ENCODE measurements at regions of chr21 and their contacts with region 1.

Region 1: GRCh38 chr21:35179990-35180540 is 131.0 kb upstream of the RUNX1 start:
- DNase-seq: peak; percentile 28
- ATAC-seq: peak; percentile 60
- H3K4me3 Mint-ChIP-seq: no peak overlapping the region
- H3K27ac Mint-ChIP-seq: no peak overlapping the region
- H3K4me1 Mint-ChIP-seq: peaks cover 26% of the 10 kb centered on the region
- H3K27me3 Mint-ChIP-seq: no peaks in the 10 kb centered on the region

Region 2: DNA sequence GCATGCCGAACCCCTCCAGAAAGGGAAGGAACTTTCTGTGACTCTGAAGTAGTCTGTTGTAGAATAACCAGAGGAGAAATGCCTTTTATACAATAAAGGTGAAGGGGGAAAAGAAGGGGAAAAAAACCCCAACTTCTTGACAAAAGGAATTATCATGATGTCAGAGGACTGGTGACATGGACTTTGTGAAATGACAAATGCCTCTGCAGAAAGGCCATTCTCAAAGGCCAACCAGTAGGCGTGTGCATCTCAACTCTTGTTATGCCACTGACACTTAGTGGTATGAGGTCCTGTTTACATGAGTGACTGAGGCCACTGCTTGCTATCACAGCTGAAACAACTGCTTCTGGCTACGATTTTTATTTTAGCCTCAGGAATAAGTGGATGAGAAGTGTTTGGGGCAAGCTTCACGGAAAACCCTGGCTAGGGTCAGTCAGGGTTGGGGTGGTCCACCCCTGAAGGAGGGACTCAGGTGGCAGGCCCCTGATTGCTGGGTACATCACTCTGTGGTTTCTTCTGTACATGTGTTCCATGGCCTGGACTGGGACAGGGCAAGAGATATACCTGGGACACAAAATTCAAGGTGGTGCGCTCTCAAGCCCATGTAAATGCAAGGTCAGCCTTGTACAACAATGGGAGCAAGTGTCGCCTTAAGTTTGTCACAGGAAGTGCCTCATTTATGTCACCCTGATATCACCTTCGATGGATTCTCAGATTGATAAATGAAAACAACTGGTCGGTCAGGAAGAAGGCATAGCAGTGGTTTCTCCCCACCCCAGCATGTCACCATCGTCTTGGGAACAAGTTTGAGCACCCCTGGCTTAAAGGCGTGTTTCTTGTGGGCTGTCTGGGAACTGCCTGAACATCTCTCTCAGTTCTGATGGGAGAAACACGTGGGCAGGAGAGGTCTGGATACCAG is 143.3 kb before region 1 on chr21:
- CTCF ChIA-PET with region 1: no interaction called
- POLR2A ChIA-PET with region 1: no interaction called
- intact Hi-C with region 1: no loop called
- DNase-seq: no peak
- ATAC-seq: peak; percentile 51
- H3K4me3 Mint-ChIP-seq: peak overlapping the region; percentile 59
- H3K27ac Mint-ChIP-seq: peak overlapping the region; percentile 94
- H3K4me1 Mint-ChIP-seq: peaks cover 96% of the 10 kb centered on the region
- H3K27me3 Mint-ChIP-seq: no peaks in the 10 kb centered on the region

Region 3: GRCh38 chr21:35150562-35151226 is 29.4 kb before region 1 on chr21:
- CTCF ChIA-PET with region 1: no interaction called
- POLR2A ChIA-PET with region 1: no interaction called
- intact Hi-C with region 1: no loop called
- DNase-seq: no peak
- ATAC-seq: peak; percentile 72
- H3K4me3 Mint-ChIP-seq: peak overlapping the region; percentile 18
- H3K27ac Mint-ChIP-seq: peak overlapping the region; percentile 90
- H3K4me1 Mint-ChIP-seq: peaks cover 63% of the 10 kb centered on the region
- H3K27me3 Mint-ChIP-seq: no peaks in the 10 kb centered on the region

Region 4: GRCh38 chr21:35226948-35227744 is 47.1 kb after region 1 on chr21:
- CTCF ChIA-PET with region 1: no interaction called
- POLR2A ChIA-PET with region 1: no interaction called
- intact Hi-C with region 1: loop called in 1 of 2 experiments (anchors 5 kb)
- DNase-seq: peak; percentile 73
- ATAC-seq: peak; percentile 83
- H3K4me3 Mint-ChIP-seq: peak overlapping the region; percentile 45
- H3K27ac Mint-ChIP-seq: peak overlapping the region; percentile 85
- H3K4me1 Mint-ChIP-seq: peaks cover 37% of the 10 kb centered on the region
- H3K27me3 Mint-ChIP-seq: no peaks in the 10 kb centered on the region

Region 5: DNA sequence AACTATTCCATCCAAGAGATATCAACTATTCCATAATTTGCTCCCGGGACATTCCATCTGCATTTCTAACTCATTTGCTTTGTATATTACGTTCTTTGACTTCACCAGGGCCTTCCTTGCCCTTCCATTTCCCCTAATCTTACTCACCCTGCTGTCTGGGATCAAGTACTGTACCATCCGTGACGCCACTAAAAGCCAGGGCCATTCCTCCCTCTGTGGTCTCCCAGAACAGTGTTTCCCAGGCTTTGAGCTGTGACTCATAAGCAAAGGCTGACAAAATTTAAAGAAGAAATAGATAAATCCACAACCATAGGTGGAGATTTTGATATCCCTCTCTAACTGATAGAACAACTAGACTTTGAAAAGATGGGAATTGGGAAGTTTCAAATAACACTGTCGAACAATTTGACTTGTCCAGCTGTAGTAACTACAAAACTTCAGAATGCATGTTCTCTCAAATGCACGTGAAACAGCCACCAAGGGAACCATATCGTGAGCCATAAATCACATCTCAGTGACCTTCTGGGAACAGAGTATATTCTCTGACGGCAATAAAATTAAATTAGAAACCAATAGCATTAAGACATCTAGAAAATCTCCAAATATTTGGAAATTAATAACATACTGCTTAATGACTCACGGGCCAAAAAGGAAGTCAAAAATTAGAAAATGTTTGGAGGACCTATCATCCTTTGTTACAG is 379.2 kb after region 1 on chr21:
- CTCF ChIA-PET with region 1: no interaction called
- POLR2A ChIA-PET with region 1: no interaction called
- intact Hi-C with region 1: no loop called
- DNase-seq: no peak
- ATAC-seq: no peak
- H3K4me3 Mint-ChIP-seq: no peak overlapping the region
- H3K27ac Mint-ChIP-seq: no peak overlapping the region
- H3K4me1 Mint-ChIP-seq: no peaks in the 10 kb centered on the region
- H3K27me3 Mint-ChIP-seq: peaks cover 8% of the 10 kb centered on the region

Measured in activated CD4-positive, alpha-beta T cell treated with anti-CD3 and anti-CD28 coated beads for 36 hours (primary cell).